HCT116 (cell line): ENCODE measurements at regions of chr12 and their contacts with region 1.

Region 1: DNA sequence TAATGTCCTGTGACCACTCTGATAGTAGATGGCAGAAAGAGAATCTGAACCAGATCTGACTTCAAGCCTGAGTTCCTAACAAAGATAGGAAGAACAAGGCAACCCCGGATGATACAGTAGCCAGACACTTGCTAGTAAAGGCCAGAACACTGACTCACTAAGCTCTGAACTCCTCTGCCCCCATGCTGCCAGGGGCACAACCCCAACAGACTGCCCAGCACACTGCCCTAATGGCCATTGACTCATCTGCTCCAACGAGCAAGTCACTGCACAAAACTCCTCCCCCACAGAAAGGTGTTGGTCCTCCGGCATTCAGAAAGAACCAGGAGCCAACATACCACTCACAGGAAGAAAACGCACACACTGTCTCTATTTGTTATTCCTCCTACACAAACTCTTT is 179.6 kb upstream of the NUDT4 start:
- DNase-seq: peak; percentile 60
- ATAC-seq: peak; percentile 88
- H3K4me3 ChIP-seq: peak overlapping the region in 1 of 2 experiments; percentile 2; a peak in 1 of 4 replicates
- H3K27ac ChIP-seq: no peak overlapping the region
- H3K4me1 ChIP-seq: peaks cover 0 to 19% of the 10 kb centered on the region in 2 experiments; a peak in 2 of 4 replicates
- H3K27me3 ChIP-seq: no peaks in the 10 kb centered on the region
- CTCF ChIP-seq: no peak
- POLR2A ChIP-seq: no peak
- RAD21 ChIP-seq: peak; percentile 35; the same call in 1 of the 2 replicates

Region 2: GRCh38 chr12:93229494-93230325 is 31.6 kb after region 1 on chr12:
- CTCF ChIA-PET with region 1: no interaction called
- POLR2A ChIA-PET with region 1: no interaction called
- RAD21 ChIA-PET with region 1: no interaction called
- intact Hi-C with region 1: loop called (anchors 2 kb)
- DNase-seq: peak; percentile 84
- ATAC-seq: peak; percentile 79
- H3K4me3 ChIP-seq: no peak overlapping the region
- H3K27ac ChIP-seq: no peak overlapping the region
- H3K4me1 ChIP-seq: peaks cover 4 to 11% of the 10 kb centered on the region in 2 experiments; a peak in 3 of 4 replicates
- H3K27me3 ChIP-seq: no peaks in the 10 kb centered on the region
- CTCF ChIP-seq: no peak
- POLR2A ChIP-seq: no peak
- RAD21 ChIP-seq: no peak